HepG2 (cell line): ENCODE measurements at regions of chr3 and their contacts with region 1.

Region 1: DNA sequence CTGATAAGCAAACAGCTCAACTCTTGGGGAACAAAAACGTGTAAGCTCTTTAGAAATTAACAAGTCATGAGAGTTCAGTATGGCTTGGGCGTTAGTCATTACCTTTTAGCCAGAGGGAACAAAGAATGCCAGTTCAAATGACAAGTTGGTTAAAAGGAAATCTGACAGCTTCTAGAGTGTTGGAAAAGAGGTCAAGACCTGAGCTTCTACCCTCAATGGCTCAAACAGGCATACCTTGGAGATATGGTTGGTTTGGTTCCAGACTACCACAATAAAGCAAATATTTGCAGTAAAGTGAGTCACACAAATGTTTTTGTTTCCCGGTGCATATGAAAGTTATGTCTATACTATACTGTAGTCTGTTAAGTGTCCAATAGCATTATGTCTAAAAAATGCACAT is 136.1 kb downstream of the CACNA1D start:
- DNase-seq: peak; percentile 9
- ATAC-seq: no peak
- H3K4me3 ChIP-seq: no peak overlapping the region
- H3K27ac ChIP-seq: no peak overlapping the region
- H3K4me1 ChIP-seq: peaks cover 16% of the 10 kb centered on the region
- H3K27me3 ChIP-seq: no peaks in the 10 kb centered on the region
- CTCF ChIP-seq: no peak
- EP300 ChIP-seq: no peak
- POLR2A ChIP-seq: no peak
- RAD21 ChIP-seq: no peak

Region 2: DNA sequence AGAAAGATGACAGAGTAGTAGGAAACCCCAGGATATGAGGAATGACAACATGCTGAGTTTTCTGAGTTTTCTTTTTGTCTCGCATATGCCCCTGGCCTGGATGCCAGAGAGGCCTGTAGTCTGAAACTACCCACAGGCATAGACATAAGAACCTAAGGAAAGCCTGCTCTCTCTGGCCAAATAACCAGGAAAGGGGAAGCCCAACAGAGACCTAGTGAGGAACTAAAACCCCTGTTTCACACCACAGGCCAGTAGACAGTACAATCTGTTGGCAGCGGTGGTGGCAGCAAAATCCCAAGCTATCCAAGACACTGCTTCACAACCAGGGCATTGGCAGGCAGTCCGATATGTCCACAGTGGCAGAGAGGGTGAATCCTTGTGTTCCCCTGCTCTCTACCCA is 228.2 kb before region 1 on chr3:
- CTCF ChIA-PET with region 1: no interaction called
- POLR2A ChIA-PET with region 1: no interaction called
- in situ Hi-C with region 1: no loop called
- intact Hi-C with region 1: loop called (anchors 5 kb)
- DNase-seq: no peak
- ATAC-seq: no peak
- H3K4me3 ChIP-seq: no peak overlapping the region
- H3K27ac ChIP-seq: no peak overlapping the region
- H3K4me1 ChIP-seq: no peaks in the 10 kb centered on the region
- H3K27me3 ChIP-seq: 0 out of 5 replicates have a peak, but pooled peaks cover 0 to 4% of the 10 kb centered on the region in 2 experiments
- CTCF ChIP-seq: no peak
- EP300 ChIP-seq: no peak
- POLR2A ChIP-seq: no peak
- RAD21 ChIP-seq: no peak